ENCODE measurements at regions of chr10 and their contacts with region 1.

Region 1: GRCh38 chr10:32346134-32346550 is 816 bp downstream of the EPC1 start:
- DNase-seq: peak; percentile 97
- H3K4me3 Mint-ChIP-seq: peak overlapping the region; percentile 89
- H3K27ac Mint-ChIP-seq: peak overlapping the region; percentile 99
- H3K4me1 Mint-ChIP-seq: peaks cover 65% of the 10 kb centered on the region
- H3K27me3 Mint-ChIP-seq: no peaks in the 10 kb centered on the region

Region 2: DNA sequence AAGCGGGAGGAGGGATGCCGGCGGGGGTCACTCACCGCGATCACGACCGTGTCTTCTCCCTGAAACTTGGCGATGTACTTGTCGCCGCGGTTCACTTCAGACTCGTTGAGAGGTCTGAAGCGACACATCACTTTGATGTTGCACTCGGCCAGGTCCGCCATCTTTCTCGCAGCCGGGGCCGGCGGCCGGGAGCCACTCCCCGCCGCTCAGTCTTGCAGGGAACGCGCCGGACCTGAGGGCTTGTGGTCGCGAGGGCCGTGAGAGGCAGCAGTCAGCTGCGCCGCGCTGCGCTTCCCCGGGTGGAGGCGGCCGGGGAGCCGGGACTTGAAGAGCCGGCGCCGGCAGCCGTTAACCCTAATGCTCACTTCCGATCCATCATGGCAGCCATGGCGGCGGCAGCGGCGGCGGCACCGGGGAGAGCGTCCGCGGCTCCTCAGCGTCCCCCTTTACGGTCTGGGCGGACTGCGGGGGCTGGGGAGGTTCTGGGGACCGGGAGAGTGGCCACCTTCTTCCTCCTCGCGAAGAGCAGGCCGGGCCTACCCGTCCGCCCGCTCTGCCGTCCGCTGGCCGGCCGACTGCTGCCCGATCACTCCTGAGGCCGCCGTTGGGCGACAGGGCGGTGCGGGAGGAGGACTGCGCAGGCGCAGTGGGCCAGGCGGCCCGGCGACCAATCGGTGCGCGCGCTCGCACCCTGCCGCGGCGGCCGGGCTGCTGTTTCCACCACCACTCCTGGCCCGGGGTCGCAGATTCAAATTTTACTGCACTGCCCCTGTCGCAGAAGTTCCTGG is 290.1 kb before region 1 on chr10 and contains the start of gene KIF5B:
- CTCF ChIA-PET with region 1: no interaction called
- intact Hi-C with region 1: loop called (anchors 1 kb)
- DNase-seq: peak; percentile 84
- H3K4me3 Mint-ChIP-seq: peak within 1 kb of the TSS; percentile 96
- H3K27ac Mint-ChIP-seq: peak within 1 kb of the TSS; percentile 92
- H3K4me1 Mint-ChIP-seq: peaks cover 39% of the 10 kb centered on the region
- H3K27me3 Mint-ChIP-seq: no peaks in the 10 kb centered on the region
- total RNA-seq, gene KIF5B: 64.9 to 67.8 TPM

Region 3: GRCh38 chr10:32232378-32232777 is 113.8 kb before region 1 on chr10:
- CTCF ChIA-PET with region 1: no interaction called
- intact Hi-C with region 1: no loop called
- DNase-seq: no peak
- H3K4me3 Mint-ChIP-seq: no peak overlapping the region
- H3K27ac Mint-ChIP-seq: no peak overlapping the region
- H3K4me1 Mint-ChIP-seq: no peaks in the 10 kb centered on the region
- H3K27me3 Mint-ChIP-seq: no peaks in the 10 kb centered on the region

Region 4: DNA sequence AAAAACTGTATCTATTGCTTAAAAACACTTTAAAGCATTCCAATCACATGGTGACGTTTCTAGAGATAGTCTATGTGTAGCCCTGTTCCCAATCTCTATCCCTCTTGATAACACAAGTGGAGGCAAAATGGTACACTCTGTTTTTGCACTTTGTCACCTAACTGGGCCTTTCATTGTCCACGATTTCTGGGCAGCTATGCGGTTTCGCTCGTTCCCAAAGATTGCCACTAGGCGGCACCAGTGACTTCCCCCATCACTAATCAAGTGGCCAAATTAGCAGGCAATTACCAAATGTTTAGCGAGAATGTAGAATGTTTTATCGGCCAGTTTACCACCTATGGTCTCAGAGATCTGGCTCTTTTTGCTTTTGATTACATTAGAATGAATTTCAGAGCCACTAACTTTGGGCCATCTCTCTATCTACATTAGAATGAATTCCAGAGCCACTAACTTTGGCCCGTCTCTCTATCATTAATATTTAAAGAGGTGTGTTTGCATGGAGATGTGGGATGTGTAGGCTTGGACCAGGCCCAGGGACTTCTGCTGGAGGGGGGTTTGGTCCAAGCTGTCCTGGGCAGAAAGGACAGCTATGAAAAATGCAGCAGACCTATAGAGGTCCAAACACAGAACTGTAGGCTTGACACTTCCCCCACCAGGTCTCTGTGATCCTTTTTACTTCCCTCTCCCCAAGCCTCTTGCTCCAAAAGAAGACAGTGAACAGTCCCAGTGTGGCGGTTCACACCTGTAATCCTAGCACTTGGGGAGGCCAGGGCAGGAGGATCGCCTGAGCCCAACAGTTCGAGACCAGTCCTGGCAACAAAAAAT is 89.3 kb before region 1 on chr10:
- CTCF ChIA-PET with region 1: interaction called, 25 read pairs
- intact Hi-C with region 1: loop called (anchors 1 kb)
- DNase-seq: peak; percentile 81
- H3K4me3 Mint-ChIP-seq: no peak overlapping the region
- H3K27ac Mint-ChIP-seq: no peak overlapping the region
- H3K4me1 Mint-ChIP-seq: peaks cover 8% of the 10 kb centered on the region
- H3K27me3 Mint-ChIP-seq: no peaks in the 10 kb centered on the region

Region 5: DNA sequence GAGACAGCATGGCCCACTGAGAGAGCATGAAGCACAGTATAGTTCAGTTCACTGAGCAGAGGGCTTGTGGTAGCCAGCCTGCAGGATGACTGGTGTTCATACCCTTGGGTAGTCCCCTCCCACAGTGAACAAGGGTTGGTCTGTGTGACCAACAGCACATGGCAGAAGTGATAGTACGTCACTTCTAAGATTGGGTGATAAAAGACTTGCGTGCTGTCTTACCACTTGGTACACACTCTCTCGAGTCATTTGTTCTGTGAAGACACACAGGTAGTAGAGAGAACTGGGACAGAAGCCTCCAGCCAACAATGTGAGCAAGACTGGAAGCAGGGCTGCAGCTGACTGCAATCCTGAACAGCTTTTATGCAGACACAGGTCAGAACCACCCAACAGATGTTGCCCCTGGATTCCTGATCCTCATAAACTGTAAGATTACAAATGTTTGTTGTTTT is 13.8 kb before region 1 on chr10:
- CTCF ChIA-PET with region 1: interaction called, 14 read pairs
- intact Hi-C with region 1: loop called (anchors 1 kb)
- DNase-seq: peak; percentile 89
- H3K4me3 Mint-ChIP-seq: peak overlapping the region; percentile 55
- H3K27ac Mint-ChIP-seq: peak overlapping the region; percentile 90
- H3K4me1 Mint-ChIP-seq: peaks cover 94% of the 10 kb centered on the region
- H3K27me3 Mint-ChIP-seq: no peaks in the 10 kb centered on the region

Region 6: DNA sequence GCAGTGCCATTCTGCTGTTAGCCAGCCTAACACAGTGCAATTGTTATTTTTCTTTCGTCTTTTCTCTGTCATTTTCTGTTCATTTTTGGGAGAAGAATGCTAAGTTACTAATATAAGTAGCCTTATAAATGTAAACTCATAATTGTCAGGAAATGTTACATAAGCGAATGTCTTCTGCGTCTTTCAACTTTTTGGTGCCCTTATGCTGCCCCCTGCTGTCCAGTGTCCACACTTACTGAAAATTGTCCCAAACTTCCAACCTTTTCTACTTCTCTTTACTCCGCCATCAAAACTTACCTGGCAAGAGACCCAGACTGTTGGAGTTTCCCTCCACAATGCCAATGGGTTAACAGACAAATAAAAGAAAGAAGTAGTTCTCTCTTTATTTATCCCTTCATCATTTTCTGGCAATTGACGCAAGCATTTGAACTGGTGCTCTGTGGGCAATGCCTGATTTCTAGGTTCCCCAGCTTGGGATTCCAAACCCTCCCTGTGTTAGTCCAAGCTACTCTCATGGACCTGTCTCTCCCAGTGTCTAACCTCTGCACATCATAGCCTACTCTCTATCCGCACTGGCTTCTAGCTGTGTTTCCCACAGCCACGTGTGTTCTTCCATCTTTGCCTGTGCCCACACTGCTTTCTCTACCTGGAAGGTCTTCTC is 21.8 kb after region 1 on chr10:
- CTCF ChIA-PET with region 1: interaction called, 17 read pairs
- intact Hi-C with region 1: loop called (anchors 1 kb)
- DNase-seq: peak; percentile 88
- H3K4me3 Mint-ChIP-seq: peak overlapping the region; percentile 41
- H3K27ac Mint-ChIP-seq: peak overlapping the region; percentile 59
- H3K4me1 Mint-ChIP-seq: peaks cover 65% of the 10 kb centered on the region
- H3K27me3 Mint-ChIP-seq: no peaks in the 10 kb centered on the region

Region 7: DNA sequence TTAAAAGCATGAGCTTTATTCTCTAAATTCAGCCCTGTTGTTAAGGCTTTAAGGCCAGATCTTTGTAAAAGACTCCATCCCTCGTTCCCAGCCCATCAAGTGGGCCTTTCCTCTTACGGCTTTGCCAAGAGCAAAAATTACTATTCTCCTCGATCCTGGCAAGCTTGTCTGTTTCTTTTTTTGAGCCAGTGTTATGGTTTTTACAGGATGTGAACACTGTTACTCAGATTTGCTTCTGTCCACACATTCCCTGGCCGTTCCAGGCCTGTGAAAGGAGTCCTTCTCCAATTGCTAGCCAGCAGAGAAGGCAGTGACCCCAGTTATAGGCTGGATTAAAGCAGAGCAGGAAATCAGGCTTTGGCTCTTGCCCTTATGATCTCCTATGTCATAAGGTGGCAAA is 47.8 kb after region 1 on chr10:
- CTCF ChIA-PET with region 1: no interaction called
- intact Hi-C with region 1: no loop called
- DNase-seq: no peak
- H3K4me3 Mint-ChIP-seq: no peak overlapping the region
- H3K27ac Mint-ChIP-seq: no peak overlapping the region
- H3K4me1 Mint-ChIP-seq: no peaks in the 10 kb centered on the region
- H3K27me3 Mint-ChIP-seq: no peaks in the 10 kb centered on the region

Region 8: GRCh38 chr10:32445740-32446535 is 99.8 kb after region 1 on chr10 and contains the start of gene CCDC7:
- CTCF ChIA-PET with region 1: no interaction called
- intact Hi-C with region 1: loop called (anchors 1 kb)
- DNase-seq: peak; percentile 85
- H3K4me3 Mint-ChIP-seq: peak within 1 kb of the TSS; percentile 94
- H3K27ac Mint-ChIP-seq: peak within 1 kb of the TSS; percentile 98
- H3K4me1 Mint-ChIP-seq: peaks cover 14% of the 10 kb centered on the region
- H3K27me3 Mint-ChIP-seq: no peaks in the 10 kb centered on the region
- total RNA-seq, gene CCDC7: 6.8 to 8.9 TPM

Region 9: GRCh38 chr10:32459051-32459698 is 113.0 kb after region 1 on chr10:
- CTCF ChIA-PET with region 1: no interaction called
- intact Hi-C with region 1: no loop called
- DNase-seq: peak; percentile 17
- H3K4me3 Mint-ChIP-seq: no peak overlapping the region
- H3K27ac Mint-ChIP-seq: no peak overlapping the region
- H3K4me1 Mint-ChIP-seq: peaks cover 34% of the 10 kb centered on the region
- H3K27me3 Mint-ChIP-seq: no peaks in the 10 kb centered on the region